PC-9 (cell line): ENCODE measurements at regions of chr15 and their contacts with region 1.

Region 1: GRCh38 chr15:49900006-49900902 is 218.8 kb downstream of the ATP8B4 start:
- DNase-seq: no peak
- H3K4me3 ChIP-seq: no peak overlapping the region
- H3K27ac ChIP-seq: no peak overlapping the region
- H3K4me1 ChIP-seq: no peaks in the 10 kb centered on the region
- H3K27me3 ChIP-seq: no peaks in the 10 kb centered on the region
- CTCF ChIP-seq: no peak

Region 2: GRCh38 chr15:49452595-49452994 is 447.7 kb before region 1 on chr15:
- CTCF ChIA-PET with region 1: no interaction called
- POLR2A ChIA-PET with region 1: interaction called, 11 read pairs
- intact Hi-C with region 1: no loop called
- DNase-seq: no peak
- H3K4me3 ChIP-seq: no peak overlapping the region
- H3K27ac ChIP-seq: no peak overlapping the region
- H3K4me1 ChIP-seq: no peaks in the 10 kb centered on the region
- H3K27me3 ChIP-seq: no peaks in the 10 kb centered on the region
- CTCF ChIP-seq: no peak

Region 3: GRCh38 chr15:49962044-49962602 is 61.9 kb after region 1 on chr15:
- CTCF ChIA-PET with region 1: no interaction called
- POLR2A ChIA-PET with region 1: no interaction called
- intact Hi-C with region 1: no loop called
- DNase-seq: no peak
- H3K4me3 ChIP-seq: no peak overlapping the region
- H3K27ac ChIP-seq: no peak overlapping the region
- H3K4me1 ChIP-seq: no peaks in the 10 kb centered on the region
- H3K27me3 ChIP-seq: no peaks in the 10 kb centered on the region
- CTCF ChIP-seq: no peak

Region 4: GRCh38 chr15:49987198-49987785 is 87.0 kb after region 1 on chr15:
- CTCF ChIA-PET with region 1: no interaction called
- POLR2A ChIA-PET with region 1: no interaction called
- intact Hi-C with region 1: no loop called
- DNase-seq: no peak
- H3K4me3 ChIP-seq: no peak overlapping the region
- H3K27ac ChIP-seq: no peak overlapping the region
- H3K4me1 ChIP-seq: no peaks in the 10 kb centered on the region
- H3K27me3 ChIP-seq: no peaks in the 10 kb centered on the region
- CTCF ChIP-seq: no peak